BJ (cell line): ENCODE measurements at regions of chr10 and their contacts with region 1.

Region 1: GRCh38 chr10:7525314-7526016 is 114.6 kb upstream of the SFMBT2 start:
- DNase-seq: peak; percentile 13
- H3K4me3 ChIP-seq: no peak overlapping the region
- H3K27me3 ChIP-seq: no peaks in the 10 kb centered on the region
- CTCF ChIP-seq: peak; percentile 74

Region 2: DNA sequence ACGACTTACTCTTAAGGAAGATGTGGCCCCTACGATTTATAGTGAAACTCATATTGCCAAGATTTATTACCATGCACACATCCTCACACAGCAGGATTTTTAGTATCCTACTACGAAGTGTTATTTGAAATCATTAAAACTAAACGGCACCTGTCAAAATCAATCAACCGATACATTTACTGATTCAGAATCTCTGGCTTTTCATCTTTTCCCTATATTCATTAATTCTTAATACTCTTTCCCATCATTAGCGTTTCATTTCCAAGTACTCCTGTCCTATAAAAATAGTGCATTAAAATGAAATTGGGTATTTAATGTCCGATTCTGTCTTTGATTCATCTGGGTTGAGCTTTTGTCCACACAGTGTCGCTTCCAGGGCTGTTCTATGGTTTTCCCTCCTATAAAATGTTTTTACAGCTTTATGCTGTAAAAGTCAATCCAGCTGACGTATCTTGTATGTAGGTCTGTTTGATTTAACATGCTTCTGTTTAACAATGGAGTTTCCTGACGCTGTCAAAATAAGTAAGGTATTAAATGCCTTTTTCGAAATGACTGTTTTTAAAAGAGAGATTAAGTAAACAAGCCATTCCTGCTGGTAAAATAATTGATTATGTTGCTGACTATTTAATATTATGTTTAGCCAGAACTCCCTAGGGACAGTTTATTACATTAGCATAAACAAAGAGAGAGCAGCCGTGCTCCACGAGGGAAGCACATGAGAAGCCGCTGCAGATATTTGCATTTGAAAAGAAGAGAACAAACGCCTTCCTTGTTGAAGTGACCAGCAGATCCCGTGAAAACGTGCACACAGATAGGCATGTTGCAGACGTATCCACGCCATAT is 92.4 kb before region 1 on chr10:
- CTCF ChIA-PET with region 1: no interaction called
- POLR2A ChIA-PET with region 1: no interaction called
- DNase-seq: no peak
- H3K4me3 ChIP-seq: no peak overlapping the region
- H3K27me3 ChIP-seq: no peaks in the 10 kb centered on the region
- CTCF ChIP-seq: no peak

Region 3: GRCh38 chr10:7515439-7515838 is 10.0 kb before region 1 on chr10:
- CTCF ChIA-PET with region 1: interaction called, 15 read pairs
- POLR2A ChIA-PET with region 1: no interaction called
- DNase-seq: no peak
- H3K4me3 ChIP-seq: no peak overlapping the region
- H3K27me3 ChIP-seq: no peaks in the 10 kb centered on the region
- CTCF ChIP-seq: no peak